K562 (cell line): ENCODE measurements at regions of chr6 and their contacts with region 1.

Region 1: GRCh38 chr6:112163295-112164257 is 76.2 kb downstream of the FAM229B start:
- DNase-seq: peak; percentile 72 to 80 (median 79)
- ATAC-seq: peak; percentile 100
- H3K4me3 ChIP-seq: no peak overlapping the region
- H3K27ac ChIP-seq: no peak overlapping the region
- H3K4me1 ChIP-seq: no peaks in the 10 kb centered on the region
- H3K27me3 ChIP-seq: peaks cover 8% of the 10 kb centered on the region in 2 experiments
- CTCF ChIP-seq: peak; percentile 84 to 89 (median 88)
- EP300 ChIP-seq: no peak
- POLR2A ChIP-seq: no peak
- RAD21 ChIP-seq: peak; percentile 83 to 93

Region 2: GRCh38 chr6:111850295-111850937 is 313.2 kb before region 1 on chr6:
- CTCF ChIA-PET with region 1: no interaction called
- POLR2A ChIA-PET with region 1: no interaction called
- in situ Hi-C with region 1: no loop called
- intact Hi-C with region 1: no loop called
- DNase-seq: no peak
- ATAC-seq: no peak; the same call in 2 of the 3 replicates
- H3K4me3 ChIP-seq: no peak overlapping the region
- H3K27ac ChIP-seq: no peak overlapping the region
- H3K4me1 ChIP-seq: peaks cover 3 to 7% of the 10 kb centered on the region in 2 experiments; a peak in 3 of 5 replicates
- H3K27me3 ChIP-seq: peaks cover 0 to 13% of the 10 kb centered on the region in 2 experiments; a peak in 3 of 5 replicates
- CTCF ChIP-seq: no peak
- EP300 ChIP-seq: no peak
- POLR2A ChIP-seq: no peak
- RAD21 ChIP-seq: no peak

Region 3: GRCh38 chr6:112010328-112010727 is 153.2 kb before region 1 on chr6:
- CTCF ChIA-PET with region 1: interaction called, 5 read pairs
- POLR2A ChIA-PET with region 1: no interaction called
- in situ Hi-C with region 1: no loop called
- intact Hi-C with region 1: loop called (anchors 5 kb)
- DNase-seq: no peak
- ATAC-seq: peak; percentile 69; the same call in 2 of the 3 replicates
- H3K4me3 ChIP-seq: no peak overlapping the region
- H3K27ac ChIP-seq: no peak overlapping the region
- H3K4me1 ChIP-seq: no peaks in the 10 kb centered on the region
- H3K27me3 ChIP-seq: peaks cover 3 to 23% of the 10 kb centered on the region in 2 experiments; a peak in 3 of 5 replicates
- CTCF ChIP-seq: peak in 1 of 3 experiments; percentile 37; a peak in 3 of 6 replicates
- EP300 ChIP-seq: no peak
- POLR2A ChIP-seq: no peak
- RAD21 ChIP-seq: peak in 1 of 2 experiments; percentile 47; a peak in 3 of 4 replicates

Region 4: DNA sequence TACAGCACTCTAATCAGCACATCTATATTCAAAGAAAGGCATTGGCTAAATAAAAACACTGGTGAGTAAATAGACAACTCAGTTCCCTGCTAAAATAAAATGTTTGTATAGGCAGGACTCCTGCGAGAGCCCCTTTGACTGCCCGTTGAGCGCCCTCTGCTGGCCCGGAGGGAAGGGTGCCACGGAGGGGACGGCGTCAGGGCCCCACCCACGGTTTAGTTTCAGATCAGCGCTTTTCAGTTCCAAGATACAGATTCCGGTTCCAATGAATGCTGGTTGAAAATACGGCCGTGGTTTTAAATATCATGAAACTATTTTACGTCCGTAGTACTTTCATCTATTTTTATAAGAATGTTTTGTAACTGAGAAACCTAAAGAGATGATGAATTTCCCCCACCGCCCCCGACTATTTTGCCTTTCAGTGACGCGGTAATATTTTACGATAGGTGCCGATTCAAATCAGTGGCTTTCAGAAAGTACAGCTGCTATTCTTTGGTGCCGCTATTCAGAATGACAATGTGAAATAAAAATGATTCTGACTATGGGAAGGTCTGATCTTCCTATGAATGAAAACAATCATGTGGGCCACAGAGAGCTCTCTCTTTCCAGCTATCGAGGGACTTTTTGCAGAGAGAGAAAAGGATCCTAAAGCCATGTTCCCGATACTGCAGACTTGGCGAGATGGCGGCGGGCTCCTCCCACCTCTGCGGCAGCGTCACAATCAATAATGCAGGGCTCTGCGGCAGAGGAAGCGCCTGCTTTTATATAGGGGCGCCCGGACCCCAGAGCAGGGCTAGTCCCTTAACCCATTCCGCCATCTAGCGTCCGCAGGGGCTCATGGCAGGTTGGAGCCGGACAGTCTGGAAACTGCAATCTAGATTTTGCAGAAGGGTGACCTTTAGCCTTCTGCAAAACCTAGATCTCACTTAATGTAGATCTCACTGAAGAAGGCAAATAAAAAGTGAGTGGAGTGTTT is 120.3 kb before region 1 on chr6:
- CTCF ChIA-PET with region 1: no interaction called
- POLR2A ChIA-PET with region 1: no interaction called
- in situ Hi-C with region 1: no loop called
- intact Hi-C with region 1: loop called (anchors 1 kb)
- DNase-seq: peak; percentile 87 to 93 (median 92)
- ATAC-seq: peak; percentile 97
- H3K4me3 ChIP-seq: peak overlapping the region; percentile 49
- H3K27ac ChIP-seq: peak overlapping the region; percentile 26
- H3K4me1 ChIP-seq: peaks cover 0 to 5% of the 10 kb centered on the region in 2 experiments; a peak in 1 of 5 replicates
- H3K27me3 ChIP-seq: peaks cover 5 to 15% of the 10 kb centered on the region in 2 experiments; a peak in 4 of 5 replicates
- CTCF ChIP-seq: peak; percentile 92 to 96 (median 95)
- EP300 ChIP-seq: peak; percentile 56
- POLR2A ChIP-seq: no peak; the same call in 1 of the 2 replicates
- RAD21 ChIP-seq: peak; percentile 86 to 89

Region 5: GRCh38 chr6:112065426-112065986 is 98.1 kb before region 1 on chr6:
- CTCF ChIA-PET with region 1: no interaction called
- POLR2A ChIA-PET with region 1: no interaction called
- in situ Hi-C with region 1: no loop called
- intact Hi-C with region 1: loop called (anchors 5 kb)
- DNase-seq: no peak
- ATAC-seq: no peak
- H3K4me3 ChIP-seq: no peak overlapping the region
- H3K27ac ChIP-seq: no peak overlapping the region
- H3K4me1 ChIP-seq: no peaks in the 10 kb centered on the region
- H3K27me3 ChIP-seq: peaks cover 0 to 4% of the 10 kb centered on the region in 2 experiments; a peak in 2 of 5 replicates
- CTCF ChIP-seq: no peak
- EP300 ChIP-seq: no peak
- POLR2A ChIP-seq: no peak
- RAD21 ChIP-seq: no peak

Region 6: DNA sequence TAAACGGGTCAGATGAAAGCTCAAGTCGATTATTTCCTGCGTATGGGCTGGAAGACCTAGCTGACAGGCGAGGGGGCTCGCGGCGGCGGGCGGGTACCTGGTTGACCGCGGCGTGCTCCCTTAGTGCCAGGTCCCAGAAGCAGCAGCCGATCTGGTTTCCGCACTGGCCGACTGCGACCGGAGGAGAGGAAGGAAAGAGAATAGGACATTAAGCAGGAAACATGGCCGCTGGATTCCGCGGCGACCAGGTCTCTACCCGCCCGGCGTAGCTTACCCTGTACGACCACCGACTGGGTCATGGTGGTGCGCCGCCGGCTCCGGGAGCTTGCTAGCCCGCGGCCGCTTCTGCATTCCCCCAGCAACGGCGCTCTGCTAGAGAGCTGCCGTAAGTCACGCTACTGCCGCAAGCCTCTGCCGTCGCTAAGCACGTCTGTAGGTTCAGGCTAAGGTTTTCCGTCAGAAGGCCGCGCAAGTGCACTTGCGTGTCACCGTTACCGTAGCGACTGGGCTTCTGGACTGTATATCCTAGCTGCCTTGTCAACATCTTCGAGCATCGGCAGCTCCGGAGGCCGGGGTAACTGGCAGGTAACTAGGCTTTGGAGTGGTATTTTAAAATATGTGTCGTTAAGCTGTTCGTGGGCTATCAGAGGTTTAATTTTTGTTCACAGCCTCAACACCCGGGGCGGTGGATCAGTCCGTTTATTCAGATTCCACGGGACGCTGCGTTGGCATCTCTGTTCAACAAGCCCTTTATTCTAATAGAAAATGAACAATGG is 76.3 kb before region 1 on chr6 and contains the starts of genes FAM229B and TUBE1:
- CTCF ChIA-PET with region 1: interaction called, 11 read pairs
- POLR2A ChIA-PET with region 1: no interaction called
- in situ Hi-C with region 1: no loop called
- intact Hi-C with region 1: loop called (anchors 2 kb)
- DNase-seq: peak; percentile 81 to 96 (median 84)
- ATAC-seq: peak; percentile 97
- H3K4me3 ChIP-seq: peak within 1 kb of the TSS; percentile 62
- H3K27ac ChIP-seq: peak within 1 kb of the TSS; percentile 67
- H3K4me1 ChIP-seq: no peaks in the 10 kb centered on the region; a peak in 1 of 5 replicates
- H3K27me3 ChIP-seq: peaks cover 0 to 2% of the 10 kb centered on the region in 2 experiments; a peak in 2 of 5 replicates
- CTCF ChIP-seq: peak in 1 of 3 experiments; percentile 7; a peak in 1 of 6 replicates
- EP300 ChIP-seq: no peak
- POLR2A ChIP-seq: peak; percentile 93
- RAD21 ChIP-seq: no peak
- polyA plus RNA-seq, gene FAM229B: 12.6 to 14.6 TPM
- polyA plus RNA-seq, gene TUBE1: 18.9 to 21.6 TPM